ENCODE measurements at regions of chr9 and their contacts with region 1.

Region 1: DNA sequence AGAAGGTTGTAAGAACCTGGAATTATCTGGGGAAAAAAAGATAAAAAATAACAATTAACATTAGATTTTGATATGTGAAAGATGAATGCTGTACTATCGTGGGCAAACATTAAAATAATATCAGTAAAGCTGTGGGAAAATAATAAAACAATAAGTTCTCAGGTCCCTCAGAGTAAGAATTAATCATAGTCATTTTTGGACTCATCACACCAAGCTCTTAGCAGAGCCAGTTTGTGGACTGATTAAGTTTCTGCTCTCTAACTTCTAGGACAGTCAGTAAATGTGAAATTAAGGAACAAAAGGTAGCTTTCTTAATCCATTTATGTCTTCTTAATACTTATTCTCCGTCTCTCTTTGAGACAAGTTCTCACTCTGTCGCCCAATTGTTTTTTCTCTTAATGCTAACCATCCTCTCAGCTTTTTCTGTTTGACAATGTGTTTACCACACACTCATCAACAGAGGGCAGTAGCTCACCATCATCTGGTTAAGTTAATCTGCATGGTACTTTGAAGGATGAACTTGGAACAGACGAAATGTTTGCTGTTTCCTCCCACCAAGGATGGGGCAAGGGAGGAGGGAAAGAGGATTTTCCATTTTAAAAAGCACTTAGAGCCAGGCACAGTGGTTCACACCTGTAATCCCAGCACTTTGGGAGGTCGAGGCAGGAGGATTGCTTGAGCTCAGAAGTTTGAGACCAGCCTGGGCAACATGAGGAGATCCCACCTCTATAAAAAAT is 5.3 kb upstream of the ACO1 start:
- DNase-seq: peak; percentile 90
- H3K4me3 Mint-ChIP-seq: no peak overlapping the region
- H3K27ac Mint-ChIP-seq: no peak overlapping the region
- H3K4me1 Mint-ChIP-seq: peaks cover 18% of the 10 kb centered on the region
- H3K27me3 Mint-ChIP-seq: peaks cover 14% of the 10 kb centered on the region
- CTCF ChIP-seq: peak; percentile 59

Region 2: DNA sequence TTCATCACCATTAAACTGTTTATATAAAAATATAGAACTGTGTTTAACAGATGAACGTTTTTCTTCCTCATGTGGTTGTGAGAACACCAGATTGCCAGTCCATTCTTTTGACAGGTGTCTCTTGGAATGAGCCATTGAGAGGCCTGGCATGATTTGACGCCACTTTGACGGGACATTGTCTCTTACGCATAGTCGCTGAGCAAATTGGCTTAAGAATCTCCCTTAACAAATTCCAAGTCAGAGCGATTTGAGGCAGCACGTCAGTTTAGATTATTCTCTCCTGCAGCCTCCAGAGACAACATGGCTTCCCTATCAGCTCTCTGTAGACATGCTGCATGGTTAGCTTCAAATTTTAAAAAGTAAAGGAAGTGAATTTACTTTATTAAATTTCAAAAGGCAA is 505.4 kb before region 1 on chr9:
- CTCF ChIA-PET with region 1: no interaction called
- POLR2A ChIA-PET with region 1: no interaction called
- intact Hi-C with region 1: no loop called
- DNase-seq: no peak
- H3K4me3 Mint-ChIP-seq: no peak overlapping the region
- H3K27ac Mint-ChIP-seq: no peak overlapping the region
- H3K4me1 Mint-ChIP-seq: no peaks in the 10 kb centered on the region
- H3K27me3 Mint-ChIP-seq: peaks cover 68% of the 10 kb centered on the region
- CTCF ChIP-seq: no peak

Region 3: DNA sequence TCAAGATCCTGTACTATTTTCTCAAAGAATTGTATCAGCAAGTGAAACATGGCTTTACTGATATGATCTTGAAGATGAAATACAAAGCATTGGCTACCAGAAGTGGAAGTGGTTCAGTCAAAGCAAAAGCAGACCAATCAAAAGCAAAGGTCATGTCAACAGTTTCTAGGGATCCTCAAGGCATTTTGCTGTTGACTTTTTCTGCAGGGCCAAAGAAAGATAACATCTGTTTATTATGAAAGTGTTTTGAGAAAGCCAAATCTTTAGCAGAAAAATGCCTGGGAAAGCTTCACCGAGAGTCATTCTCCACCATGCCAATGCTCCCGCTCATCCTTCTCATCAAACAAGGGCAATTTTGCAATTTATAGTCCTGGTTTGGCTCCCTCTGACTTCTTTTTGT is 85.1 kb before region 1 on chr9:
- CTCF ChIA-PET with region 1: no interaction called
- POLR2A ChIA-PET with region 1: no interaction called
- intact Hi-C with region 1: no loop called
- DNase-seq: no peak
- H3K4me3 Mint-ChIP-seq: no peak overlapping the region
- H3K27ac Mint-ChIP-seq: no peak overlapping the region
- H3K4me1 Mint-ChIP-seq: no peaks in the 10 kb centered on the region
- H3K27me3 Mint-ChIP-seq: peaks cover 76% of the 10 kb centered on the region
- CTCF ChIP-seq: no peak

Region 4: DNA sequence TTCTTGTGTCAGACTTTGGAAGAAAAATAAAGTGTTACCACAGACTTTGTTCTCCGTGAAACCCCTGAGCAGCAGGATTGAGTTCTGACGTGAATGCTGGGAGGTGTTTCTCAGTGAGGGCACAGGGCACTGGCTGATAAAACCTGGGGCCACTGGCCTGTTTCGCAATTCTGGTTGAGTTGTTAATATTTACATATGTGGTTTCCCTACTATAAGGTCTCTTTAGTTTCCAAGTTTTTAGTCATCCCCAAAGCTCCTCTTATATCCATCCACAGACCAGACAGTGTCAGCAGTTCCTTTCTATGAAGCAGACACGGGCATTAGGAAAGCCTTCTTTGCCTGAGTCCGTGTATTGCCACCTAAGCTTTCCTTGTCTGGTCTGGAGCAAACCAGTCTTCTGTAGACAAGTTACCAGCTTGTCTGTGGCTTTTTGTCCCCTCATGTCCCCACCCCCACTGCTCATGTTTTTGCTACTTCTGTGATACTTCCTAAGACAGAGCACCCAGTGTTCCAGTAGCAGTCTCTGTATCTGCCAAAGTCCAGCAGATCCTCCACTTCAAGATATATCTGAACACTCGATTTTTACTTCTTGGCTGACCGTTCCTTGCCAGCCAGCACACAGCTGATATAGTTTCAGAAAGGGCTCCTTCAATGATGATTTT is 47.2 kb after region 1 on chr9:
- CTCF ChIA-PET with region 1: interaction called, 45 read pairs
- POLR2A ChIA-PET with region 1: interaction called, 6 read pairs
- intact Hi-C with region 1: loop called (anchors 2 kb)
- DNase-seq: peak; percentile 88
- H3K4me3 Mint-ChIP-seq: no peak overlapping the region
- H3K27ac Mint-ChIP-seq: peak overlapping the region; percentile 79
- H3K4me1 Mint-ChIP-seq: no peaks in the 10 kb centered on the region
- H3K27me3 Mint-ChIP-seq: no peaks in the 10 kb centered on the region
- CTCF ChIP-seq: no peak

Region 5: DNA sequence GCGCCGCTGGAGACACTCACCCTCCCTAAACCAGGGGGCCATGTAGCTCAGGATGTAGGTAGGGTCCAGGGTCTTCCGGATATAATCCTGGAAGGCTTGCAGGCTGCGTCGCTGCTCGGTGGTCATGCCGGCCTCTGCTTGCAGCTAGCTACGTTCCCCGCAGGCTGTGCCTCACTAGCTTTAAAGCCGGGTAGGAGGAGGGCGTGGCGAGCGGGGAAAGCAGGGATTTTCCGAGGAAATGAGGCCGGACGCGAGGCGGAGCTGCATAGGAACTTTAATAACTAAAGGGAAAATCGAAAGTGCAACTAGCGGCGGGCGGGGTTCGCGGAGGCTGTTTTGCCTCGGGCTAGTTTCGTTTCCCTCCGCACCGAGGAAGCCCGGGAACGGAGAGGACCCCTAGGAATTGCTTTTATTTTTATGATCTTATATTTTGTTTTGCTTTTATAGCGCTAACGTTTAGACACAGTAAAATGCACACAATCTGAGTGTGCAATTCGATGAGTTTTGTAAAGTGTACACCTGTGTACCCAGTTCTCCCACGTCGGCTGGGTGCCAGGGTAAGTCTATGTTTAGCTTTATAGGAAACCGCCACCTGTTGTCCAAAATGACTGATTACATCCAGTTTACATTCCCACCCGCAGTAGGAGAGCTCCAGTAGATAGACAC is 147.0 kb after region 1 on chr9 and contains the start of gene RIGI:
- CTCF ChIA-PET with region 1: interaction called, 84 read pairs
- POLR2A ChIA-PET with region 1: interaction called, 61 read pairs
- intact Hi-C with region 1: loop called (anchors 1 kb)
- DNase-seq: peak; percentile 96
- H3K4me3 Mint-ChIP-seq: peak within 1 kb of the TSS; percentile 82
- H3K27ac Mint-ChIP-seq: peak within 1 kb of the TSS; percentile 62
- H3K4me1 Mint-ChIP-seq: peaks cover 30% of the 10 kb centered on the region
- H3K27me3 Mint-ChIP-seq: no peaks in the 10 kb centered on the region
- CTCF ChIP-seq: peak; percentile 64
- total RNA-seq, gene RIGI: 3.0 and 3.2 TPM in 2 replicates

Region 6: DNA sequence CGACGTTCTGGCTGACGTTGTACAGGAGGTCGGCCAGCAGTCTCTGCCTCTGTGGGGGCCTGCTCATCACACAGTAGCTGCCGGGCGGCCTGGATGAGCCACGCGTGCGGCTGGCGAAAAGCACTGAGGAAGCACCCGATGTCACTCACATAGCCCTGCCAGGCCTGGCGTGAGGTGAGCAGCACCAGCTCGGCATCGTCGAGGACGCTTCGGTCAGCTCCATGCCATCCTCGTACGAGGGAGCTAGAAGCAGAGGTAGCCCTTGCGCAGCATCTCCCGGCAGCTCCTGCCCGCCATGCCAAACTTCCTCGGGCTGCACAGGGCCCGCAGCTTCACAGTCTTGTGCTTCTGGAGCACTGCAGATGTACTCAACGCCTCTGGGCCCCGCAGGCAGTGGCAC is 187.6 kb after region 1 on chr9:
- CTCF ChIA-PET with region 1: interaction called, 601 read pairs
- POLR2A ChIA-PET with region 1: interaction called, 49 read pairs
- intact Hi-C with region 1: no loop called
- DNase-seq: no peak
- H3K4me3 Mint-ChIP-seq: no peak overlapping the region
- H3K27ac Mint-ChIP-seq: no peak overlapping the region
- H3K4me1 Mint-ChIP-seq: peaks cover 6% of the 10 kb centered on the region
- H3K27me3 Mint-ChIP-seq: no peaks in the 10 kb centered on the region
- CTCF ChIP-seq: no peak

Region 7: DNA sequence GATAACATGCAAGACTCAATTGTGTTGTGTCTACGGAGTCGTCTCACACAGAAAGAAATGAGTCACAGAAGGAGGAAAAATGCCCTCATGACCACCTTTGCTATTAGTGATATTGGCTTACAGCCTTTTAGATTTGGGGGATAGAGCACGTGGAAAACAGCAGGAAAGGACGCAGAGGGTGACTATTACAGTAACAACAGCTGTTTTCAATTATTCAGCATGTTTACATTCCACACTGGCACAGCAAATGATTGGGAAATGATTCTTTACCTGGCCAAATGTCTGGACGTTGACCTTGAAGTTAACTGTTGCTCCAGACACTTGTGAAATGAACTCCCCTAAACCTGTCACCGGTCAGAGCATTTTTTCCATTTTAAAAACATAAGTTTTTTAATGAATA is 575.5 kb after region 1 on chr9:
- CTCF ChIA-PET with region 1: interaction called, 12 read pairs
- POLR2A ChIA-PET with region 1: no interaction called
- intact Hi-C with region 1: no loop called
- DNase-seq: peak; percentile 20
- H3K4me3 Mint-ChIP-seq: no peak overlapping the region
- H3K27ac Mint-ChIP-seq: no peak overlapping the region
- H3K4me1 Mint-ChIP-seq: peaks cover 6% of the 10 kb centered on the region
- H3K27me3 Mint-ChIP-seq: no peaks in the 10 kb centered on the region
- CTCF ChIP-seq: no peak